ENCODE measurements at regions of chr17 and their contacts with region 1.

Region 1: DNA sequence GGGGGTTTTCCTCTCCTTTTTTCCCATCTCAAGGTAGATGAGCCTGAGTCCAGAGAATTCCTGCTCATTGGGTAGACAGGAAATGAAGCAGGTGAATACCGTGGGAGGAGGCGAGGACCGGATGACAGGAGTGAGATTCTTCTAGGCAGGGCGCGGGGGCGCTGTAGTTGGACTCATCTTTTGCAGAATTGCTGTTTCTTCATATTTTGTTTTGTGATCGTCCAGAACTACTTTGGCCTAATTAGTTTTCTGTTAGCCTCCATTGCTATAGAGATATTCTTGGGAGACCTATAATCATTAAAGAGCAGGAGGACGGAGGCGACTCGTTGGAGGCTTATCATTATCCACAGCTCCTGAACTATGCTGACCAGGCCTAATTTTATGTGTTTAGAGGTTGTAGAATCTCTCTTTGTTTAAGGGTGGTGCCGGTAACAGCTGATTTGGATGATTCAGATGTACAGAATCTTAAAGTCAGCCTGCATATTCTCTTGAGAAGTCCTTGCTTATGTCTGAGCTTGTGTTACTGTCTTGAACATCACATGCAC is 650 bp downstream of the ATP6V0A1 start:
- DNase-seq: peak; percentile 62 to 85 (median 74)
- H3K4me3 ChIP-seq: peak overlapping the region; percentile 57 to 98 (median 86)
- H3K27ac ChIP-seq: peak overlapping the region; percentile 80 to 99 (median 96)
- H3K27me3 ChIP-seq: no peaks in the 10 kb centered on the region
- CTCF ChIP-seq: peak in 47 of 56 donors; percentile 3 to 62 (median 41)

Region 2: DNA sequence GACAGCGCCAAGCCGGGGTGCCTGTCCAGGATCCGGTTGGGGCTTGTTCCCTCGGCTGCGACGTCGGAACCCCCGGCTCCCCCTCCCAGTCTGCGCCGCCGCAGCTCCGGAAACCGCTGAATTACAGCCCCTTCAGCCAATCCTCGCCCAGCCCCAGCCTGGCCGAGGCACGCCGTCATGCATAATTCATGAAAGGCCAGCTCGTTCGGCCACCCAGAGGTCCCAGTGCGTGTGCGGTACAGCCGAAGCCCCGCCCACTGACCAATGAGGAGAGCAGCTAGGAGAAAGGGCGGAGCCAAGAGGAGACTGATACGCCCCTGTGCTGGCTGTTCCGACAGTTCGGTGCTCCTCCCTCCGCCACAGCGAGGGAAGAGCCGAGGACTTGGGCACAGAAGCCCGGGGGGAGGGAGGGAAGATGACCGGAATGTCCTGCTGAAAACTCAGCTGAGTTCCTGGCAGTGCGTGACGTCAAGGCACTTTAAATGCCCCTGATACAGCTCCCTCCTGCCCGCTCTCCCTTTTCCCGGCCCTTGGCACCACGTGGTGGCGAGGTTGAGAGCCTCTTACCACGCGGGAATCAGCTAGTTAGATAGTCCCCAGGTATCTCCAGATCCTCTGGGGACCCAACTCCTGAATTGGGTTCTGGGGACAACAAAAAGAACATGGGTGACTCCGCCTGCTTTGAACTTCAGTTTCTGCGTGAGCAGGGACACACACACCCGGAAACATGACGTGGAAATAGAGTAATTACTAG is 70.8 kb before region 1 on chr17 and contains the start of gene STAT3:
- intact Hi-C with region 1: loop called in 1 of 2 experiments (anchors 2 kb)
- DNase-seq: peak; percentile 100
- H3K4me3 ChIP-seq: peak within 1 kb of the TSS; percentile 77 to 100 (median 95)
- H3K27ac ChIP-seq: peak within 1 kb of the TSS; percentile 70 to 100 (median 98)
- H3K27me3 ChIP-seq: no peaks in the 10 kb centered on the region
- CTCF ChIP-seq: peak in 33 of 56 donors; percentile 4 to 61 (median 28)
- total RNA-seq, gene STAT3: 57.7 to 203 (median 98.0) TPM

Region 3: GRCh38 chr17:42422958-42423712 is 36.2 kb before region 1 on chr17 and contains the start of gene CAVIN1:
- intact Hi-C with region 1: loop called (anchors 2 to 5 kb)
- DNase-seq: peak; percentile 80 to 98 (median 89)
- H3K4me3 ChIP-seq: peak within 1 kb of the TSS; percentile 38 to 90 (median 74)
- H3K27ac ChIP-seq: peak within 1 kb of the TSS in 57 of 59 donors; percentile 30 to 93 (median 79)
- H3K27me3 ChIP-seq: peaks cover 0 to 26% (median 5%) of the 10 kb centered on the region in 45 donors
- CTCF ChIP-seq: peak in 11 of 56 donors; percentile 8 to 32 (median 14)
- total RNA-seq, gene CAVIN1: 11.5 to 70.8 (median 30.0) TPM

Region 4: DNA sequence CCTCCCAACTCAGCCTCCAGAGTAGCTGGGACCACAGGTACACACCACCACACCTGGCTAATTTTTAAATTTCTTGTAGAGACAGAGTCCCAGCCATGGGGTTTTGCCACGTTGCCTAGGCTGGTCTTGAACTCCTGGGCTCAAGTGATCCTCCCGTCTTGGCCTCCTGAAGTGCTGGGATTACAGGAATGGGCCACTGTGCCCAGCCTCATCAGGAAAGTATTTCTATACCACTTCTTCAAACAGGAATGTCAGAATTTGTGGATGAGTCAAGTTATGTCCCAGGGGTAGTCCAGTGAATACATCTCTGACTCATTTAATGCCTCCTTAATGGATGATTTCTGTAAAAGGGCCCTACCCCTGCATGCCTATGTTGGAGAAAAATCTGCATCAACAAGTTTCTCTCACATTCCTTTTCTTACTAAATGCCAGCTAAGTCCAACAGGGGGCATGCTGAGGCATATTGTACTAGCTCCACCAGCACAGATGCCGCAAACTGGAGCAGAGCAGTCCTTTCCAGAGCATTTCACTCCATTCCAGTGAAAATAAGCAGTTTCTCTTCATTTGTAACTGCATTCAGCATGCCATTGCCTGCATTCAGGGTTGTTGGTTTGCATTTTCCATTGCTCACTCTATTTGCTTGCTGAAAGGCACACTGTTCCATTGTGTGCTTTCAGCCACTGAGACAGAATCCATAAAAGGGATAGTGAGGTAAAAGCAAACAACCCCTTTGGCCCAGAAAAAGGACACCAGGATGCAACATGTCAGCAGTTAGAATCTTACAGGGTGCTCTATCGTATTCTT is 31.0 kb before region 1 on chr17:
- intact Hi-C with region 1: loop called (anchors 2 to 5 kb)
- DNase-seq: peak in 6 of 10 donors; percentile 51 to 80 (median 62)
- H3K4me3 ChIP-seq: peak overlapping the region in 13 of 59 donors; percentile 0 to 38 (median 27)
- H3K27ac ChIP-seq: peak overlapping the region; percentile 25 to 97 (median 77)
- H3K27me3 ChIP-seq: peaks cover 0 to under 1% (median 0%) of the 10 kb centered on the region in 45 donors
- CTCF ChIP-seq: peak; percentile 38 to 80 (median 69)

Region 5: DNA sequence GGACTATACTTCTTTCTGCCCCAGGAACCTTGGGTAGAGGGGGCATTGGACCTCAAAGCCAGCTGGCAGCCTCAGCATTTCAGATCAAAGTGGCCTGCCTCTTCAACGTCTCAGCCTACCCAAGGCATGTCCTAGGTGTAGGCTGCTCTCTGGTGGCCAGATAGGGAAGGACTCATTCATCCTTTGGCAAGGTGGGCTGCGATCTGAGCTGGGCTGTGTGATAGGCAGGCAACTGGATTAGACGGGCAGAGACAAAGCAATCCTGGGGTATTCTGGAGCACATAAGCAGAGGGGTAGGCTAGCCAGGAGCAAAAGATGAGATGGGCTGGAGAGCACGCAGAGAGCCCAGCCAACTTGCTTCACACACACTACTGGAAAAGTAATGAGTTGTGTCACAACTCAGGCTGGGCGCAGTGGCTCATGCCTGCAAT is 68.0 kb after region 1 on chr17:
- intact Hi-C with region 1: loop called in 1 of 2 experiments (anchors 5 kb)
- DNase-seq: peak in 6 of 10 donors; percentile 30 to 73 (median 60)
- H3K4me3 ChIP-seq: no peak overlapping the region
- H3K27ac ChIP-seq: peak overlapping the region in 45 of 59 donors; percentile 0 to 86 (median 60)
- H3K27me3 ChIP-seq: no peaks in the 10 kb centered on the region
- CTCF ChIP-seq: peak; percentile 53 to 84 (median 74)

Region 6: DNA sequence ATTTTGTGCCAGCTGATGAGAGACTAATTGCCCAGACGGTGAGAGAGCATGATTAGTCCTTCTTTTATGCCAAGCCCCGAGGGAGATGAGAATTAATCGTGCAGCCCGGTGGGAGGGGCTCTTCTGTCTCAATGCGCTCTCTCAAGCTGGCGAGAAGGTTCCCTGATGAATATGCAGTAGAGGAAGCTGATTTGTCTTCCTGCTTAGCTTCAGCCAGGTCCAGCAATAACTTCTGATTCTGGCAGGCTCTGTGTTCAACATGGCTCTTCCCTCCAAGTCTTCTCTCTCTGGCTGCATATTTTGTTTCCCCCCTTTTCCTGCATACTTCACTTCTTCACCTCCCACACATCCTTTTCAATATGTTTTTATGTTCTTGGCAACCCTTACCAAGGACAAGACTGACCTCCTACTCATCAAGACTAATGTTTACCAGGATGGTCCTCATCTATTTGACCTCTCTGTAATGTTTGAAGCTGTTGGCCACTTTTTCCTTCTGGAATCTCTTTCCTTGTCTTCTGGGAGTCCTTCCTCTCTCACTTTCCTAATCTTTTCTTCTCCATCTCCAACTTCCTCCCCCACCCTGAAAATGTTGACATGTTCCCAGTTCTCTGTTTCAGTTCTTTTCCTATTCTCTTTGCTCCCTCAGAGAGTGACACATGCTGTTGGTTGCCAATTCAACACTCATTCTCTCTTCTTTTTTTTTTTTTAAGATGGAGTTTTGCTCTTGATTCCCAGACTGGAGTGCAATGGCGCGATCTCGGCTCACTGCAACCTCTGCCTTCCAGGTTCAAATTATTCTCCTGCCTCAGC is 972.6 kb after region 1 on chr17:
- intact Hi-C with region 1: no loop called
- DNase-seq: no peak
- H3K4me3 ChIP-seq: peak overlapping the region in 2 of 59 donors; percentile 12 to 25
- H3K27ac ChIP-seq: peak overlapping the region in 27 of 59 donors; percentile 9 to 75 (median 46)
- H3K27me3 ChIP-seq: no peaks in the 10 kb centered on the region
- CTCF ChIP-seq: no peak